ENCODE measurements at regions of chr3 and their contacts with region 1.

Region 1: GRCh38 chr3:17032407-17033034 is 147.8 kb downstream of the PLCL2 start:
- DNase-seq: peak; percentile 23
- H3K4me3 ChIP-seq: no peak overlapping the region
- H3K27ac ChIP-seq: no peak overlapping the region
- H3K4me1 ChIP-seq: no peaks in the 10 kb centered on the region
- H3K27me3 ChIP-seq: no peaks in the 10 kb centered on the region
- CTCF ChIP-seq: peak; percentile 65

Region 2: DNA sequence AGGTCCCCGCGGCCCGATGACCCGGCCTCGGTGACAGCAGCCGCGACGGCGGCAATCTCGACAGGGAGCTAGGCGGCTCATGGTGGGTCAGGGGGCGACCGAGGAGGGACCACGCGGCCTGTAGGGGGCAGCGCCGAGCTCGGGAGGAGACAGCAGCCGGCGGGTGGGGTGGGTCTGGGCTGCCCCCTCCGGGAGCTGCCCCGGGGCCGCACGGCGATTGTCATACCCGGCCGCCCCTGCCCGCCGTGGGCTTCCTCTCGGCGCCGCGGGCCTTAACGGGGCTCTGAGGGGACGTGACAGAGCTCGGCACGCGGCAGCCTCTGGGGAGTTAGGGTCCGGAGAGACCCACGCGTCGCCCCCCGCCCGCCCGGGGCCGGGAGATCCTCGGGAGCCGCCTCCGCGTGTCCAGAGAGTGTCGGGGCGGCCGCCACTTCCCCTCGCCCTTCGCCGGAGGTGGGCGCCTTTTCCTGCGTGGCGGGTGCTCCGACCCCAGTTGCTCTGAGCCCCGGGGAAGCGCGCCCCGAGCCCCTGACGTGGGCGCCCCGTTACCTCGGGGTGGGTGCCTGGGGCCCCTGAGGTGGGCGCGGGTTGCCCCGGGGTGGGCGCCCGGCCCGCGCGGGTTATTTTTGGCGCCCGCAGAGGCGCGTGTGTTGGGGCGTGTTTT is 148.3 kb before region 1 on chr3:
- intact Hi-C with region 1: loop called (anchors 5 kb)
- DNase-seq: peak; percentile 77
- H3K4me3 ChIP-seq: peak overlapping the region; percentile 59
- H3K27ac ChIP-seq: peak overlapping the region; percentile 87
- H3K4me1 ChIP-seq: no peaks in the 10 kb centered on the region
- H3K27me3 ChIP-seq: no peaks in the 10 kb centered on the region
- CTCF ChIP-seq: peak; percentile 72

Measured in colonic mucosa (tissue), 4 donors.